ENCODE measurements at regions of chr10 and their contacts with region 1.

Region 1: GRCh38 chr10:26448706-26449435 is 10.7 kb downstream of the APBB1IP start:
- DNase-seq: peak; percentile 91
- ATAC-seq: peak; percentile 70
- H3K4me3 Mint-ChIP-seq: peak overlapping the region; percentile 68
- H3K27ac Mint-ChIP-seq: peak overlapping the region; percentile 92
- H3K4me1 Mint-ChIP-seq: peaks cover 76% of the 10 kb centered on the region
- H3K27me3 Mint-ChIP-seq: no peaks in the 10 kb centered on the region

Region 2: GRCh38 chr10:26468700-26469099 is 19.8 kb after region 1 on chr10:
- CTCF ChIA-PET with region 1: interaction called, 12 read pairs
- DNase-seq: peak; percentile 79
- ATAC-seq: peak; percentile 82
- H3K4me3 Mint-ChIP-seq: peak overlapping the region; percentile 65
- H3K27ac Mint-ChIP-seq: peak overlapping the region; percentile 82
- H3K4me1 Mint-ChIP-seq: peaks cover 86% of the 10 kb centered on the region
- H3K27me3 Mint-ChIP-seq: no peaks in the 10 kb centered on the region

Region 3: DNA sequence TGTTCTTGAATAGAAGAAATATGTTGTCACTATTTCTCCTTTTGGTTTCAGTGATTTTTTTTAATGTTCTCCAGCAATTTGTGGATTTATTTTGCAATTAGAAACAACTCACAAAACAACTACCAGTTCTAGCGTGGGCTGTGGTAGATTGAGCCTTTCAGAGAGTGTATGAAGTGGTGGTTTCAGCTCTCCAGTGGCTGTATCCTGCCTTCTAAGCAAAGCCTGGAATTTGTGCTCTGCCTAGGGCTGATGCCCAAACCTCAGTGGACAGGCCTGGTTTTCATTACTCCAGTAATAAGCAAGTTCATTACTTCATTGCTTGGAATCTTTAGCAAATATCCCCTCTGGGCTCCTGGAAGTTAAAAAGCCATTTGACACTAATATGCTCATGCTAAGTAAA is 25.2 kb after region 1 on chr10:
- CTCF ChIA-PET with region 1: interaction called, 12 read pairs
- DNase-seq: no peak
- ATAC-seq: peak; percentile 22
- H3K4me3 Mint-ChIP-seq: peak overlapping the region; percentile 31
- H3K27ac Mint-ChIP-seq: peak overlapping the region; percentile 87
- H3K4me1 Mint-ChIP-seq: peaks cover 83% of the 10 kb centered on the region
- H3K27me3 Mint-ChIP-seq: no peaks in the 10 kb centered on the region

Measured in activated CD8-positive, alpha-beta memory T cell treated with anti-CD3 and anti-CD28 coated beads, Interleukin-2, amount 10 ng/mL, durations not matched to agents 7 days and 5 days (primary cell).